Astrocyte of the cerebellum (primary cell): ENCODE measurements at regions of chr15 and their contacts with region 1.

Region 1: GRCh38 chr15:65163041-65163440 is 22.1 kb downstream of the CLPX start:
- DNase-seq: no peak
- H3K4me3 ChIP-seq: no peak overlapping the region
- CTCF ChIP-seq: no peak

Region 2: DNA sequence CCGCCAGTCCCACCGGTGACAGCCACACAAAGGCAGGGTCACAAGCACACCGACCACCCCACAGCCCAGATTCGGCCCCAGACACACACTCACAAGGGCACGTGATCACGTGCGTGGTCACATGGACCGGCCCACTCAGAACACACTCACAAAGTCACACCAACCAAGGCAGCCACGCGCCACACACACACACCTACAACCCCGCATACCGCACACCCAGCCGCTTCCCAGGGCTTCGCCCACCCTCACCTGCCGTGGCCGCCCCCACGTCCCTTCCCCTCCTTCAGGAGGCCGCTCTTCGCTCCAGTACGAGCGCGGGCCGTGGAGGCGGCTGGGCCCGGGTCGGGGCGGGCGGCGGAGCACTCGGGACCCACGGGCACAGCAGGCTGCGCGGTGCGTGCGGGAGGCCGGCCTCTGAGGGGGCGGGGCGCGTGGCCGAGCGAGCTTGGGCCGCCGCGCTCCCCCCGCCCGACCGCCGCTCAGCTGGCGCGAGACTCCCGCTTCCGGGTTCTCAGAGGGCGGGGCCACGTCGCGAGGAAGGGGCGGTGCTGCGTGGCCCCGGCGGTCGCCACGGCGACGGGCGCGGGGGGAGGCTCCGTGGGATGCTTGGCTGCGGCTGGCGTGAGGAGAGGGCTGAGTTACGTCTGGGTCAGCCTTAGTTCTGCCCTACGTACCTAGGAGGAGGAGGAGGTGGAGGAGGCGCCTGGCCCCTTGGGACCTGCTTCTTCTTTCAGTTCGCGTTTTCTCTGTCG is 173.4 kb before region 1 on chr15 and contains the start of gene SPG21:
- in situ Hi-C with region 1: no loop called
- DNase-seq: peak; percentile 72
- H3K4me3 ChIP-seq: peak within 1 kb of the TSS; percentile 77
- CTCF ChIP-seq: no peak

Region 3: DNA sequence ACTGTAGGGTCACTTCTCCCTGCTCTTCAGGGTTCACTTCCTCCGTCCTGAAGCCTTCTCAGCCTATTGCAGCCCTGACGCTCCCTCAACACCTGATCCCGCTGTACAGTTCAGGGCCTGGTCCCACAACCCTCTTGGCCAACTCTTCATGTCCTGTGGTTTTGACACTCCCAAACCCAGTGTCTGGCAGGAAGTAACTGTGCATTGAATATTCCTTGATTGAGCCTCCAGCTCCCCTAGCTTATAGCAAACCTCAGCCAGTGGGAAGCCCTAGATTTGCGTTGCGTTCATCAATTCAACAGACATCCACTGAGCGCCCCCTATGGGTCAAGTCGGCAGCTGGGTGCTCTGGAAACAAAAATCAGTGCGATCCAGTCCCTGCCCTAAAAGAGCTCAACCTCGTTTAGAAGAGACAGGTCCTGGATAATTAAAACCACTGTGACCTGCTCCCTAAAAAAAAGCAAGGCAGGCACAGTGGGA is 61.6 kb before region 1 on chr15:
- in situ Hi-C with region 1: loop called (anchors 5 kb)
- DNase-seq: peak; percentile 51
- H3K4me3 ChIP-seq: no peak overlapping the region
- CTCF ChIP-seq: peak; percentile 91